Left colon (tissue), 2 donors: ENCODE measurements at regions of chr6 and their contacts with region 1.

Region 1: GRCh38 chr6:25490018-25490801 is 161.8 kb upstream of the SCGN start:
- DNase-seq: peak; percentile 71 to 80
- ATAC-seq: peak; percentile 98

Region 2: GRCh38 chr6:25263657-25264056 is 226.6 kb before region 1 on chr6:
- intact Hi-C with region 1: loop called in 1 of 2 experiments (anchors 2 kb)
- DNase-seq: no peak
- ATAC-seq: no peak